GM12878 (cell line): ENCODE measurements at regions of chr15 and their contacts with region 1.

Region 1: DNA sequence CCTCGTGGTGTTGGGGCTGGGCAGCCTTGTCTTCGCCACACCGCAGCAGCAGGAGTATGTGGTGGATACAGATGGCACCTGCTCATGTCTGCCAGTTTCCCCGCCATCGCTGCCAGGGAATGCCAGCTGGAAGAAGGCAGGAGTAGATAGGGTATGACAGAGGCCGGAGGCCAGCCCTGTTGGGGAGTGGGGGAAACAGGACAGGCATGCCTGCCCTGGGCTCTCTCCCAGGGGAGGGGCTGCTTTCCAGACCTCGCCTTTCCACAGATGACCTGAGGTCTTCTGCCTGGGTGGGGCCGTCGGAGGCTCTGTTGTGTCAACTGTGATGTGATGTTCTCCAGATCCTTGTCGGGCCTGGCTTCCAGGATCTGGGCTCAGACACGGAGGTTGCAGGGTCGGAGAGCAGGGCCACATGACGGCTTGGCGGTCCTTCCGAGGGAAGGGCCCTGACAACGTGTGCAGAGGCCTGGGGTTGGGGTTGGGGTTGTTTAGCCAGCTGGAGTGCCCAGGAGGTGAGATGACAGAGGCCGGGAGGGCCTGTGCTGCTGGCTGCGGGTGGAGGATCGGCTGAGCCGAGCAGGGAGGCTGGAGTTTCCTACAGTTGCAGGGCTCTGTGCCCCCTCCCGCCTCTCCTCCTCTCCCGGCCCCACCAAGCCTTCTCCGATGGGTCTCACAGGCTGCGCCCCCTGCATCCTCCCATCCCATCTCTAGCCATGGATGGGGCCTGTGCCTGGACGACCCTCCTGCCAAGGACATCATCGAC is 102.0 kb downstream of the TBC1D2B start:
- DNase-seq: no peak
- ATAC-seq: no peak
- H3K4me3 ChIP-seq: no peak overlapping the region
- H3K27ac ChIP-seq: no peak overlapping the region
- H3K4me1 ChIP-seq: no peaks in the 10 kb centered on the region
- H3K27me3 ChIP-seq: no peaks in the 10 kb centered on the region
- CTCF ChIP-seq: no peak
- EP300 ChIP-seq: no peak
- POLR2A ChIP-seq: no peak
- RAD21 ChIP-seq: no peak

Region 2: DNA sequence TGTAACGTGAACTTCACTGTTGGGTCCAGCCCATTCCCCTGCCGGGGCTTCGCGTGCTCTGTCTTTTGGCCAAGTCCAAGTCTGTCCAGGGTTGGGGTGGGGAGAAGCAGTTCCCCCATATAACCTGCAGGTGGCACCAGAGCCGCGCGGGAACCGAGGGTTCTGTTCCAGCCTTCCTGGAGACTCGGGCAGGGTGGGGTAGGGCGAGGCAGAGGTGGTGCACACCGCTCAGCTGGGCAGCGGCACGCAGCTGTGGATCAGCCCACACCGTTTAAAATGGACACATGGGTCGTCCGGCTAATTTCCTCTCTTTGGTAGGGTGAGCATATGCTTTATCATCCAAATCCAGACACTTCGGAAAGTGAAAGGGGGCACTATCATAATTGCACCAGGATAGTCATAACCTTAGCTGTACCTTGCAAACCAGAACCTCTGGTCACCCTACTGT is 16.1 kb before region 1 on chr15:
- CTCF ChIA-PET with region 1: no interaction called
- POLR2A ChIA-PET with region 1: no interaction called
- RAD21 ChIA-PET with region 1: no interaction called
- SMC1A ChIA-PET with region 1: no interaction called
- in situ Hi-C with region 1: no loop called
- intact Hi-C with region 1: no loop called
- DNase-seq: peak; percentile 13
- ATAC-seq: peak; percentile 98
- H3K4me3 ChIP-seq: peak overlapping the region; percentile 39; the same call in 1 of the 2 replicates
- H3K27ac ChIP-seq: no peak overlapping the region
- H3K4me1 ChIP-seq: peaks cover 6% of the 10 kb centered on the region
- H3K27me3 ChIP-seq: no peaks in the 10 kb centered on the region
- CTCF ChIP-seq: peak; percentile 93 to 98 (median 95)
- EP300 ChIP-seq: no peak
- POLR2A ChIP-seq: no peak
- RAD21 ChIP-seq: peak; percentile 93

Region 3: GRCh38 chr15:77986891-77987764 is 11.6 kb after region 1 on chr15:
- CTCF ChIA-PET with region 1: no interaction called
- POLR2A ChIA-PET with region 1: no interaction called
- RAD21 ChIA-PET with region 1: no interaction called
- SMC1A ChIA-PET with region 1: no interaction called
- in situ Hi-C with region 1: no loop called
- intact Hi-C with region 1: no loop called
- DNase-seq: no peak
- ATAC-seq: no peak
- H3K4me3 ChIP-seq: no peak overlapping the region
- H3K27ac ChIP-seq: no peak overlapping the region
- H3K4me1 ChIP-seq: peaks cover 14% of the 10 kb centered on the region
- H3K27me3 ChIP-seq: no peaks in the 10 kb centered on the region
- CTCF ChIP-seq: no peak
- EP300 ChIP-seq: no peak
- POLR2A ChIP-seq: no peak
- RAD21 ChIP-seq: no peak

Region 4: DNA sequence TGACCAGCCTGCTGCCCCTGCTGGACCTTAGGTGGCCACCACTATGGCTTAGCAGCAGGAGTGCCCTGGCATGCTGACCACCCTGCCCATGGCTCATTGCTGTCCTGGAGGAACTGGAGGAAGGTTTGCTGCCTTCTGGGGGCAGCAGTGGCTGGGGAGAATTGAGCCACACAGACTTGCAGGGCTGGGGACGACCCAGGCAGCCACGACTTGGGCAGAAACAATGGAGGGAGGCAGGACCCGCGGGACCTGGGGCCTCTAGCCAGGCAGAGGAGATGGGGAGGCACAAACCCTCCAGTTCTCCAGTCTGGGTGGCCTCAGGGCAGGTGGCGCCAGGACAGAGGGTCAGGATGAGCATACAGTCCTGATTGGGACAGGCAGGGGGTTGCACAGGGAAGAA is 802.9 kb after region 1 on chr15:
- CTCF ChIA-PET with region 1: no interaction called
- POLR2A ChIA-PET with region 1: no interaction called
- RAD21 ChIA-PET with region 1: no interaction called
- SMC1A ChIA-PET with region 1: no interaction called
- in situ Hi-C with region 1: loop called (anchors 5 kb)
- intact Hi-C with region 1: no loop called
- DNase-seq: no peak
- ATAC-seq: no peak
- H3K4me3 ChIP-seq: no peak overlapping the region
- H3K27ac ChIP-seq: no peak overlapping the region
- H3K4me1 ChIP-seq: no peaks in the 10 kb centered on the region
- H3K27me3 ChIP-seq: no peaks in the 10 kb centered on the region
- CTCF ChIP-seq: no peak
- EP300 ChIP-seq: no peak
- POLR2A ChIP-seq: no peak
- RAD21 ChIP-seq: no peak